CD4-positive, alpha-beta T cell (primary cell): ENCODE measurements at regions of chr15 and their contacts with region 1.

Region 1: GRCh38 chr15:39801641-39802309 is 19.1 kb upstream of the FSIP1 start:
- DNase-seq: peak in 2 of 14 experiments; percentile 23 to 35
- ATAC-seq: peak; percentile 41
- H3K4me3 ChIP-seq: no peak overlapping the region
- H3K4me3 Mint-ChIP-seq: no peak overlapping the region
- H3K27ac ChIP-seq: no peak overlapping the region
- H3K27ac Mint-ChIP-seq: no peak overlapping the region
- H3K4me1 ChIP-seq: no peaks in the 10 kb centered on the region
- H3K4me1 Mint-ChIP-seq: no peaks in the 10 kb centered on the region
- H3K27me3 ChIP-seq: peaks cover 14 to 31% of the 10 kb centered on the region in 2 experiments
- H3K27me3 Mint-ChIP-seq: peaks cover 49% of the 10 kb centered on the region
- CTCF ChIP-seq: peak; percentile 20

Region 2: GRCh38 chr15:39747326-39747725 is 54.4 kb before region 1 on chr15:
- CTCF ChIA-PET with region 1: no interaction called
- POLR2A ChIA-PET with region 1: no interaction called
- intact Hi-C with region 1: loop called in 1 of 2 experiments (anchors 10 kb)
- DNase-seq: no peak
- ATAC-seq: no peak
- H3K4me3 ChIP-seq: no peak overlapping the region
- H3K4me3 Mint-ChIP-seq: no peak overlapping the region
- H3K27ac ChIP-seq: no peak overlapping the region
- H3K27ac Mint-ChIP-seq: no peak overlapping the region
- H3K4me1 ChIP-seq: no peaks in the 10 kb centered on the region
- H3K4me1 Mint-ChIP-seq: no peaks in the 10 kb centered on the region
- H3K27me3 ChIP-seq: peaks cover 0 to 9% of the 10 kb centered on the region in 2 experiments
- H3K27me3 Mint-ChIP-seq: peaks cover 35% of the 10 kb centered on the region
- CTCF ChIP-seq: no peak